RWPE1 (cell line): ENCODE measurements at regions of chr15 and their contacts with region 1.

Region 1: DNA sequence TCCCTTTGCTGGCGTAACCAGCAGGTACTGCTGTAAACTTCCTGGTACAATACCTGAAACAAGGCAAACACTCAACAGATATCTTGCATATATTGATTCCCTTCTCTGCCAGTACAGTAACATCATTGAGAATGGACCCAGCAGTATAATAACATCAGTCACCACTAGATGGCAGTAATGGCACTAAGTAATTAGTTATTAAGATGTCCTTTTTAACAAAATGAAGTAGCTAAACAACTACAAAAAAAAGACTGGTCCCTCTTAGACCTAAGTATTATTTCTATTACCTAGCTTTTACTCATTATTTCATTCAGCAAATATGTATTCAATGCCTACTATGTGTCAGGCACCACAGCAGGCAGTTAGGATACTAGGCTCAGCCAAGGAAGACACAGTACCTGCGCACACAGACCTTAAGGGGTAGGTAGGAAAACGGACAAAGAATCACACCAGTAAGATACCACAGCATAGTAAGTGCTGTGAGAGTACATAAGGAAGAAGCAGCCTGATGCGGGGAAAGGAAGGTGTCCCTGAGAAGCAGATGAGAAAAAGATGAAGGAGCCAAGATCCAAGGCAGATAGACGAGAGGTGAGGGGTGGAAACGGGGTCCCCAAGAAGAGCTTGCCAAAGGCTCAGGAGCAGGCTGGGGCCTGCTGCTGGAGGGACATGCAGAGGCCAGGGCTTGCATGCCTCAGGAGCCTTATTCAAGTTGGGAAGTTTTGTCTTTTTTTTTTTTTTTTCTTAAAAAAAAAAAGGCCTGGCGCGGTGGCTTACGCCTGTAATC is 102.8 kb upstream of the CHD2 start:
- DNase-seq: no peak
- H3K27ac ChIP-seq: peak overlapping the region; percentile 76
- CTCF ChIP-seq: peak; percentile 88

Region 2: GRCh38 chr15:92617549-92618520 is 179.5 kb before region 1 on chr15:
- CTCF ChIA-PET with region 1: no interaction called
- POLR2A ChIA-PET with region 1: no interaction called
- DNase-seq: no peak
- H3K27ac ChIP-seq: no peak overlapping the region
- CTCF ChIP-seq: no peak

Region 3: GRCh38 chr15:92899948-92900708 is 102.8 kb after region 1 on chr15 and contains the start of gene CHD2:
- CTCF ChIA-PET with region 1: no interaction called
- POLR2A ChIA-PET with region 1: interaction called, 12 read pairs
- DNase-seq: peak; percentile 91
- H3K27ac ChIP-seq: peak within 1 kb of the TSS; percentile 98
- CTCF ChIP-seq: no peak

Region 4: GRCh38 chr15:94127006-94127405 is 1329.6 kb after region 1 on chr15:
- CTCF ChIA-PET with region 1: no interaction called
- POLR2A ChIA-PET with region 1: no interaction called
- DNase-seq: no peak
- H3K27ac ChIP-seq: no peak overlapping the region
- CTCF ChIP-seq: no peak